ENCODE measurements at regions of chr22 and their contacts with region 1.

Region 1: GRCh38 chr22:30079952-30080533 is at the start of gene HORMAD2:
- DNase-seq: no peak
- H3K4me3 ChIP-seq: no peak within 1 kb of the TSS
- H3K27ac ChIP-seq: no peak within 1 kb of the TSS
- H3K4me1 ChIP-seq: no peaks in the 10 kb centered on the region
- H3K27me3 ChIP-seq: no peaks in the 10 kb centered on the region
- CTCF ChIP-seq: no peak
- total RNA-seq, gene HORMAD2: not detected

Region 2: DNA sequence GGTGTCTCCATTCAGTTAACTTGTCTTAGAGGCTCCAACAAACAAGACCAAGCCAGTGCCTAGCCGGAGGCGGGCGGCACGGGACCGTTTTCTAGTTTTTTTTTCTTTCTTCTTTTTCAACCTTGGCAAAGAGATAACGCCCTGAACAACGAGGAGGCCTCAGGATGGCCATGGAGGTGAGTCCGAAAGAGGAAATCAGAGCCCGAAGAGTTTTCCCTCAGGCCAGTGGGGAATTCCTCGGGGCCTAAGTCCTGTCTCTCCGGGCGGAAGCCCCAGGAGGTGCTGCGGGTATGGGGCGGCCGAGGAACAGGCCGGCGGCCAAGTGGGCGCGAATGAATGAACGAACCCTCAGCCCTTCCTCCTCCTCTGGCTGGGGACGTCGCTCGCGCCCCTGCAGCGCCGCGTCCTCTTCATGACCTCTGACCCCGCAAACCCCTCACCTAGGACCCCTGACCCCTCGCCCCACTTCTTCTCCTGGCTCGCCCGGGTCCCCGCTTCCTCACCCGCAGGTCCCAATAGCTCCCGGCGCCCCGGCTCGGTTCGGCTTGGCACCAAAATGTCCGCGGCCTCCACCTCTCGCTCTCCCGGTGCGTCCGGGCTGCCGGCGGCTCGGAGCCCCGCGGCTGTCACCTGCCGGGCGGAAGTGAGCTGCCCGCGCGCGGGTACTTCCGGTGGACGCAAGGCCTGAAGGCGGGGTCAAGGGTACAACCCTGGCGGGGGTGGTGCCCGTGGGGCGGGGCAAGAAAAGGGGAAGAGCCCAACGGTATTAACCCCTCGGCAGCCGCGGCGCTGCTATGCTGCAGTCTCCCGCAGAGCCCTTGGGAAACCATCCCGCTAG is 691.9 kb before region 1 on chr22 and contains the start of gene AP1B1:
- CTCF ChIA-PET with region 1: no interaction called
- dilution Hi-C with region 1: no loop called
- in situ Hi-C with region 1: loop called in 1 of 2 experiments (anchors 25 kb)
- intact Hi-C with region 1: no loop called
- DNase-seq: peak; percentile 88
- H3K4me3 ChIP-seq: peak within 1 kb of the TSS; percentile 77 to 90 (median 84)
- H3K27ac ChIP-seq: peak within 1 kb of the TSS; percentile 46
- H3K4me1 ChIP-seq: peaks cover 5% of the 10 kb centered on the region
- H3K27me3 ChIP-seq: no peaks in the 10 kb centered on the region
- CTCF ChIP-seq: no peak
- total RNA-seq, gene AP1B1: 68.8 to 87.5 TPM

Measured in mammary epithelial cell (primary cell).